H1 (cell line): ENCODE measurements at regions of chr21 and their contacts with region 1.

Region 1: GRCh38 chr21:45098867-45099266 is 24.5 kb downstream of the ADARB1 start:
- DNase-seq: no peak
- H3K4me3 ChIP-seq: no peak overlapping the region
- H3K27ac ChIP-seq: no peak overlapping the region
- H3K4me1 ChIP-seq: no peaks in the 10 kb centered on the region; a peak in 1 of 7 replicates
- H3K27me3 ChIP-seq: no peaks in the 10 kb centered on the region
- CTCF ChIP-seq: peak in 2 of 3 experiments; percentile 41 to 72; a peak in 2 of 4 replicates
- EP300 ChIP-seq: no peak
- POLR2A ChIP-seq: no peak
- RAD21 ChIP-seq: peak; percentile 28 to 44; a peak in 2 of 4 replicates

Region 2: GRCh38 chr21:45078877-45079281 is 20.0 kb before region 1 on chr21:
- CTCF ChIA-PET with region 1: interaction called, 13 read pairs
- POLR2A ChIA-PET with region 1: interaction called, 3 read pairs
- DNase-seq: no peak
- H3K4me3 ChIP-seq: no peak overlapping the region
- H3K27ac ChIP-seq: no peak overlapping the region
- H3K4me1 ChIP-seq: peaks cover 0 to 7% (median 2%) of the 10 kb centered on the region in 4 experiments; a peak in 3 of 7 replicates
- H3K27me3 ChIP-seq: peaks cover 4 to 18% (median 14%) of the 10 kb centered on the region in 4 experiments; a peak in 6 of 7 replicates
- CTCF ChIP-seq: no peak
- EP300 ChIP-seq: no peak
- POLR2A ChIP-seq: no peak
- RAD21 ChIP-seq: no peak

Region 3: GRCh38 chr21:45087022-45087823 is 11.6 kb before region 1 on chr21:
- CTCF ChIA-PET with region 1: interaction called, 16 read pairs
- POLR2A ChIA-PET with region 1: interaction called, 3 read pairs
- DNase-seq: no peak
- H3K4me3 ChIP-seq: no peak overlapping the region
- H3K27ac ChIP-seq: no peak overlapping the region
- H3K4me1 ChIP-seq: no peaks in the 10 kb centered on the region; a peak in 1 of 7 replicates
- H3K27me3 ChIP-seq: no peaks in the 10 kb centered on the region; a peak in 1 of 7 replicates
- CTCF ChIP-seq: no peak
- EP300 ChIP-seq: no peak
- POLR2A ChIP-seq: no peak
- RAD21 ChIP-seq: no peak

Region 4: DNA sequence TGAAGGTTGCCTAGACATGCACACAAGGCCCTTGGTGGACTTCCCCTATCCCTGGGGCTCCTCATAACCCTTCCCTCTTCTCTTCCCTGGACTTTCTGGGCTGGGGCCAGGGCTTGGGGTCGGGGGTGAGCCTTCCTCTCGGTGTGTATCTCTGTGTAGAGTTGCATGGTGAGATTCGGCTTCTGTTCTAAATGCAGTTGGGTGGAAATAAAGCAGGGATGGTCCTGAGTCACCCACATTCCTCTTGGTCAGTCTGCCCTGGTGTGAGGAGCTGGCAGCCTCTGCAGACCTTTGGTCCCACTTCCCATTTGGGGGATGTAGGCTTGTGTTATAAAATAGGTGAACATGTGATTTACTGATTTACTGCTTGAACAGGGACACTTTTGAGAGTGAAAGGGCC is 13.5 kb after region 1 on chr21:
- CTCF ChIA-PET with region 1: interaction called, 22 read pairs
- POLR2A ChIA-PET with region 1: interaction called, 4 read pairs
- DNase-seq: no peak
- H3K4me3 ChIP-seq: no peak overlapping the region
- H3K27ac ChIP-seq: no peak overlapping the region
- H3K4me1 ChIP-seq: no peaks in the 10 kb centered on the region
- H3K27me3 ChIP-seq: no peaks in the 10 kb centered on the region
- CTCF ChIP-seq: no peak
- EP300 ChIP-seq: no peak
- POLR2A ChIP-seq: no peak
- RAD21 ChIP-seq: no peak

Region 5: GRCh38 chr21:45120975-45121374 is 22.1 kb after region 1 on chr21:
- CTCF ChIA-PET with region 1: interaction called, 78 read pairs
- POLR2A ChIA-PET with region 1: interaction called, 3 read pairs
- DNase-seq: no peak
- H3K4me3 ChIP-seq: no peak overlapping the region
- H3K27ac ChIP-seq: no peak overlapping the region
- H3K4me1 ChIP-seq: no peaks in the 10 kb centered on the region
- H3K27me3 ChIP-seq: no peaks in the 10 kb centered on the region
- CTCF ChIP-seq: no peak
- EP300 ChIP-seq: no peak
- POLR2A ChIP-seq: no peak
- RAD21 ChIP-seq: no peak

Region 6: DNA sequence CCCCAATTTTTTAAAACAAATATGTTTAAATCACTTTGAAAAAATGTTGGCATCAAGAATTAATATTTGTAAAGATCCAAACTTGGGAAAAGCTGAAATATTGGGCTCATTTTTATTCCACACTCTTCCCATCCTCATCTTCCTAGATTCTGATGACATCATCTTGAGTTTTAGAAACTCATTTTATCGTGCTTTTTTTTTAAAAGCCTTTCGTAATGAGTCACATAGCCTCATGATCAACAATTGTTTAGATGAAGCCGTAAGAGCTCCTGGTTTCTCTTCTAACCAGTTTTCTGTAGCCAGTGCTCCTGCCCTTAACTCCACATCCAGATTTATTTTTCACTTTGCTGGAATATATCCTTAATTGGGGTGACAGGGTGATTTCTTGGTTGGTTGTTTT is 110.2 kb after region 1 on chr21:
- CTCF ChIA-PET with region 1: no interaction called
- POLR2A ChIA-PET with region 1: no interaction called
- DNase-seq: no peak
- H3K4me3 ChIP-seq: no peak overlapping the region
- H3K27ac ChIP-seq: no peak overlapping the region
- H3K4me1 ChIP-seq: no peaks in the 10 kb centered on the region
- H3K27me3 ChIP-seq: no peaks in the 10 kb centered on the region; a peak in 1 of 7 replicates
- CTCF ChIP-seq: no peak
- EP300 ChIP-seq: no peak
- POLR2A ChIP-seq: no peak
- RAD21 ChIP-seq: no peak